PC-9 (cell line): ENCODE measurements at regions of chr14 and their contacts with region 1.

Region 1: DNA sequence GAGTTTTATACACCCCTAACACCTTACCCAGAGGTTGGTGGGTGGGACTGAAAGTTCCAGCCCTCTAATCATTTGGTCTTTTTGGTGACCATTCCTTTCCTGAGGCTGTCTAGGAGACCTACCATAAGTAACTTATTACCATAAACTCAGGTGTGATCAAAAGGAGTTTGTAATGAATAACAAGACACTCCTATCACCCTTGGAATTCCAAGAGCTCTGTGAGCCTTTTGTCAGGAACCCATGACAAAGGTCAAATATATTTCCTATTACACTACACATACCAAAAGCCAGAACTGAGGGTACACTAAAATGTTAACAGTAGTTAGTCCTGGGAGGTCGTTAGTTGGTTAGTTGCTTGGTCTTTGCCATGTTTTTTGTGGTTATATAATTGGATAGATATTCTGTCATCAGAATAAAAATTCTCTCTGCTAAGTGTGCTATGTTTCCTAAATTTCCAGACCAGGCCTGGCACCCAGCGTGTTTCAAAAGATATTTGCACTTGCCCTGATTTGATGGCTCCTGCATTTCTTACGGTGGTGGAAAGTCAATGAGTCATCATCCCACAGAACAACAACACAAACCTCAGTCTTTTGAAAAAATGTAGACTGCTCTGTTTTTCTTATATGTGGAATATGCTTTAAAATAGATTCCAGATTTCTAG is 27.0 kb upstream of the AKAP5 start:
- DNase-seq: peak; percentile 65 to 94
- H3K4me3 ChIP-seq: peak overlapping the region; percentile 30; the same call in 1 of the 2 replicates
- H3K27ac ChIP-seq: peak overlapping the region; percentile 82
- H3K4me1 ChIP-seq: peaks cover 34% of the 10 kb centered on the region
- H3K27me3 ChIP-seq: no peaks in the 10 kb centered on the region
- CTCF ChIP-seq: no peak

Region 2: DNA sequence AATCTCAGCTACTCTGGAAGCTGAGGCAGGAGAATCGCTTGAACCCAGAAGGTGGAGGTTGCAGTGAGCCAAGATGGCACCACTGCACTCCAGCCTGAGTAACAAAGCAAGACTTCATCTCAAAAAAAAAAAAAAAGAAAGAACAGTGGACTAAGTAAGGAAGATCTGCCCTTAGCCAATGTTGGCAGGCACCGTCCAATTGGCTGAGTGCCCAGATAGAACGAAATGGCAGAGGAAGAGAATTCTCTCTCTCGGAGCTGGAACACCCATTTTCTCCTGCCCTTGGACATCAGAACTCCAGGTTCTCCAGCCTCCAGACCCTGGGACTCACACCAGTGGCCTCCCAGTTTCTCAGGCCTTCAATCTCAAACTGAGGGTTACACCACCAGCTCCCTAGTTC is 194.0 kb before region 1 on chr14:
- CTCF ChIA-PET with region 1: no interaction called
- POLR2A ChIA-PET with region 1: interaction called, 20 read pairs
- intact Hi-C with region 1: no loop called
- DNase-seq: no peak
- H3K4me3 ChIP-seq: no peak overlapping the region
- H3K27ac ChIP-seq: no peak overlapping the region
- H3K4me1 ChIP-seq: peaks cover 9% of the 10 kb centered on the region
- H3K27me3 ChIP-seq: no peaks in the 10 kb centered on the region
- CTCF ChIP-seq: no peak

Region 3: GRCh38 chr14:64421166-64421565 is 17.1 kb before region 1 on chr14:
- CTCF ChIA-PET with region 1: interaction called, 8 read pairs
- POLR2A ChIA-PET with region 1: interaction called, 11 read pairs
- intact Hi-C with region 1: loop called (anchors 1 kb)
- DNase-seq: peak; percentile 68 to 72
- H3K4me3 ChIP-seq: no peak overlapping the region
- H3K27ac ChIP-seq: peak overlapping the region; percentile 47
- H3K4me1 ChIP-seq: peaks cover 11% of the 10 kb centered on the region
- H3K27me3 ChIP-seq: no peaks in the 10 kb centered on the region
- CTCF ChIP-seq: no peak

Region 4: DNA sequence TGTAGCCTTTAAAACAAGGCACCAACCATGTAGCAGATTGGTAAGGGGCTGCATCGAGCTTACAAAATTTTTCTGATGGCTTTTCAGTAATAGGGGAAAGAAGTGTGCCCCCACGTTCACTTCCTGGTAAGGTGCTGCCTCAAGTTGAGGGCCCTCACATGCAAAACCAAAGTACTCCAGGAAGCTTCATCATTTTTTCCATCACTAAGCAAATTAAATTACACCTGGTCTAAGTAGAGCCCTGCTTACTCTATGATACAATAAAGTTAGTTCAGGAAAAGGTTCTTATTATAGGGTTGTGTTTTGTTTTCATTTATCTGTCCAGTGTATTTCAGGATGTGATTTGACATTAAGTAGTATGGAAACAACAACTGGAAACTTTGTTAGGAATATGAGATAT is 11.9 kb after region 1 on chr14:
- CTCF ChIA-PET with region 1: no interaction called
- POLR2A ChIA-PET with region 1: no interaction called
- intact Hi-C with region 1: no loop called
- DNase-seq: no peak
- H3K4me3 ChIP-seq: no peak overlapping the region
- H3K27ac ChIP-seq: no peak overlapping the region
- H3K4me1 ChIP-seq: no peaks in the 10 kb centered on the region
- H3K27me3 ChIP-seq: no peaks in the 10 kb centered on the region
- CTCF ChIP-seq: no peak

Region 5: GRCh38 chr14:64520701-64521100 is 82.4 kb after region 1 on chr14:
- CTCF ChIA-PET with region 1: no interaction called
- POLR2A ChIA-PET with region 1: interaction called, 13 read pairs
- intact Hi-C with region 1: no loop called
- DNase-seq: peak in 1 of 2 experiments; percentile 72
- H3K4me3 ChIP-seq: no peak overlapping the region
- H3K27ac ChIP-seq: peak overlapping the region; percentile 55
- H3K4me1 ChIP-seq: peaks cover 12% of the 10 kb centered on the region
- H3K27me3 ChIP-seq: no peaks in the 10 kb centered on the region
- CTCF ChIP-seq: no peak

Region 6: GRCh38 chr14:64817631-64818030 is 379.3 kb after region 1 on chr14:
- CTCF ChIA-PET with region 1: interaction called, 14 read pairs
- POLR2A ChIA-PET with region 1: no interaction called
- intact Hi-C with region 1: no loop called
- DNase-seq: peak; percentile 35 to 50
- H3K4me3 ChIP-seq: no peak overlapping the region
- H3K27ac ChIP-seq: no peak overlapping the region
- H3K4me1 ChIP-seq: 0 out of 2 replicates have a peak, but pooled peaks cover 3% of the 10 kb centered on the region
- H3K27me3 ChIP-seq: peaks cover 10% of the 10 kb centered on the region; the same call in 1 of the 2 replicates
- CTCF ChIP-seq: no peak